Activated CD8-positive, alpha-beta memory T cell treated with anti-CD3 and anti-CD28 coated beads, Interleukin-2, amount 10 ng/mL, durations not matched to agents 7 days and 5 days (primary cell): ENCODE measurements at regions of chr9 and their contacts with region 1.

Region 1: DNA sequence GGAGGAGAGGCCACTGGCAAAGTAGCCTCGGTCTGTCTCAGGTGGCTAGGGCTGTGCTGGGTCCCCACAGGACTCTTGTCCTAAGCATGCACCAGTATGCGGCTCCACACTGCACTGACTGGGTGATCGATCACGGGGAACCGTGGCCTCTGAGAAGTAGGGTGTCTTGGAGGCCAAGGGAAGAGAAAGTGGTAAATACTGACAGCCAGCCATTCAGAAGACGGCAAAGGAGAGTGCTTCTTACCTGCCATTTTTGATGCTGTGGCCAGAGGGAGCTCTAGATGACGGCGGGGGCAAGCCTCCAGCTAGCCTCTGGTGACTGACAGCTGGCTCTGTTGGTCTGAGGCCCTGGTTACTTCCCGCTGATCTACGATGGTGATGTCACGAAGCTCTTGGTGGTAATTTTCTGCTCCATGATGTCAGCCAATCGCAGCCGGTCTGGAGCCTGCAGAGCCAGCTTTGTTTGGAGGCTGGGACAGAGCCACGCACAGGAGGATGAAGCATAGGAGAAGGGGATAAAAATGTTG is 40.4 kb upstream of the GADD45G start:
- DNase-seq: no peak
- ATAC-seq: no peak
- H3K4me3 Mint-ChIP-seq: no peak overlapping the region
- H3K27ac Mint-ChIP-seq: no peak overlapping the region
- H3K4me1 Mint-ChIP-seq: peaks cover 5% of the 10 kb centered on the region
- H3K27me3 Mint-ChIP-seq: peaks cover 21% of the 10 kb centered on the region

Region 2: GRCh38 chr9:89576404-89576839 is 12.0 kb after region 1 on chr9:
- CTCF ChIA-PET with region 1: interaction called, 10 read pairs
- DNase-seq: no peak
- ATAC-seq: no peak
- H3K4me3 Mint-ChIP-seq: no peak overlapping the region
- H3K27ac Mint-ChIP-seq: no peak overlapping the region
- H3K4me1 Mint-ChIP-seq: peaks cover 22% of the 10 kb centered on the region
- H3K27me3 Mint-ChIP-seq: peaks cover 69% of the 10 kb centered on the region